Upper lobe of right lung (tissue), 1 donor: ENCODE measurements at regions of chr11 and their contacts with region 1.

Region 1: DNA sequence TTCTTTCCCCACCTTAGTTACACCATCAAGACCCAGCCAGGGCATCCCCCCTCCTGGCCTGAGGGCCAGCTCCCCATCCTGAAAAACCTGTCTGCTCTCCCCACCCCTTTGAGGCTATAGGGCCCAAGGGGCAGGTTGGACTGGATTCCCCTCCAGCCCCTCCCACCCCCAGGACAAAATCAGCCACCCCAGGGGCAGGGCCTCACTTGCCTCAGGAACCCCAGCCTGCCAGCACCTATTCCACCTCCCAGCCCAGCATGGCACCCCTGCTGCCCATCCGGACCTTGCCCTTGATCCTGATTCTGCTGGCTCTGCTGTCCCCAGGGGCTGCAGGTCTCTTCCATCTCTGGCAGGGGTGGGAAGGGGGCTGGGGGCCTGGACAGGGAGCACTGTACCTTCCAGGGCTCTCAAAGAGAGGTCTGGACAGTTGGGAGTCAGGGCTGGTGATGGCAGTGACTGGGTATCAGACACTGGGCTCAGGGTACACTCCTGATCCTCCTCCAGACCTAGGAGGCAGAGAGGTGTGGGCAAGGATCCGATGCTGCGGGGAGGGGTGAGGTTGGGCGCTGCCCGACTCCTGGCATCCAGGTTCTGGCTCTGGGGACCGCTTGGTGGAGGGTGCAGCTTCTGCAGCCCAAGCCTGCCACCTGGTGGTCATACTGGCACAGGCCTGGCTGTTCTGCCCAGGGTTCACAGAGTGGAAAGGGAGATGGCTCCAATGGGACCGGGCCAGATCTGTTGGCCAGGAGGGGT is at the start of gene UPK2:
- DNase-seq: peak; percentile 94
- ATAC-seq: peak; percentile 98
- H3K4me3 ChIP-seq: no peak within 1 kb of the TSS
- H3K27ac ChIP-seq: no peak within 1 kb of the TSS
- H3K4me1 ChIP-seq: no peaks in the 10 kb centered on the region
- H3K27me3 ChIP-seq: peaks cover 5% of the 10 kb centered on the region
- CTCF ChIP-seq: peak; percentile 94
- total RNA-seq, gene UPK2: not detected

Region 2: GRCh38 chr11:118689851-118690552 is 266.3 kb before region 1 on chr11:
- intact Hi-C with region 1: loop called (anchors 5 kb)
- DNase-seq: peak; percentile 99
- ATAC-seq: peak; percentile 98
- H3K4me3 ChIP-seq: peak overlapping the region; percentile 42
- H3K27ac ChIP-seq: peak overlapping the region; percentile 66
- H3K4me1 ChIP-seq: peaks cover 11% of the 10 kb centered on the region
- H3K27me3 ChIP-seq: no peaks in the 10 kb centered on the region
- CTCF ChIP-seq: peak; percentile 80

Region 3: GRCh38 chr11:118907051-118908042 is 48.9 kb before region 1 on chr11:
- intact Hi-C with region 1: loop called (anchors 10 kb)
- DNase-seq: peak; percentile 89
- ATAC-seq: peak; percentile 81
- H3K4me3 ChIP-seq: no peak overlapping the region
- H3K27ac ChIP-seq: no peak overlapping the region
- H3K4me1 ChIP-seq: peaks cover 51% of the 10 kb centered on the region
- H3K27me3 ChIP-seq: no peaks in the 10 kb centered on the region
- CTCF ChIP-seq: peak; percentile 96

Region 4: GRCh38 chr11:119206511-119207399 is 250.5 kb after region 1 on chr11:
- intact Hi-C with region 1: no loop called
- DNase-seq: peak; percentile 90
- ATAC-seq: peak; percentile 62
- H3K4me3 ChIP-seq: peak overlapping the region; percentile 93
- H3K27ac ChIP-seq: peak overlapping the region; percentile 85
- H3K4me1 ChIP-seq: peaks cover 13% of the 10 kb centered on the region
- H3K27me3 ChIP-seq: no peaks in the 10 kb centered on the region
- CTCF ChIP-seq: no peak